ENCODE measurements at regions of chr7 and their contacts with region 1.

Region 1: GRCh38 chr7:157961731-157962457 is 625.1 kb downstream of the DNAJB6 start:
- DNase-seq: no peak
- H3K4me3 ChIP-seq: no peak overlapping the region
- H3K27ac ChIP-seq: no peak overlapping the region
- H3K4me1 ChIP-seq: no peaks in the 10 kb centered on the region
- H3K27me3 ChIP-seq: no peaks in the 10 kb centered on the region
- CTCF ChIP-seq: no peak

Region 2: DNA sequence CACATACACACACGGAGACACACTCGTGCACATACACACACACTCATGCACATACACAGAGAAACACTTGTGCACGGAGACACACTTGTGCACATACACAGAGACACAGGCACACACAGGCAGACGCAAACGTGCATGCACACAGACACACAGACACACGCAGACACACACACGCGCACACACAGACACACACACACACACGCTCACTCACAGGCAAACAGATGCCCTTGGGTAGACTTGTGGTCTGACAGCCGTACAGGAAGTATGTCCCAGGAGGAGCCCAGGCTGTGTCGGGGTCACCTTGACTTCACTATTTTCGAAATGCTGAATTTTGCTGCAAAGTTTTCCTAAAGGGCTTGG is 87.0 kb before region 1 on chr7:
- CTCF ChIA-PET with region 1: no interaction called
- dilution Hi-C with region 1: loop called (anchors 5 kb)
- in situ Hi-C with region 1: no loop called
- intact Hi-C with region 1: no loop called
- DNase-seq: no peak
- H3K4me3 ChIP-seq: no peak overlapping the region
- H3K27ac ChIP-seq: no peak overlapping the region
- H3K4me1 ChIP-seq: no peaks in the 10 kb centered on the region
- H3K27me3 ChIP-seq: no peaks in the 10 kb centered on the region
- CTCF ChIP-seq: no peak

Region 3: DNA sequence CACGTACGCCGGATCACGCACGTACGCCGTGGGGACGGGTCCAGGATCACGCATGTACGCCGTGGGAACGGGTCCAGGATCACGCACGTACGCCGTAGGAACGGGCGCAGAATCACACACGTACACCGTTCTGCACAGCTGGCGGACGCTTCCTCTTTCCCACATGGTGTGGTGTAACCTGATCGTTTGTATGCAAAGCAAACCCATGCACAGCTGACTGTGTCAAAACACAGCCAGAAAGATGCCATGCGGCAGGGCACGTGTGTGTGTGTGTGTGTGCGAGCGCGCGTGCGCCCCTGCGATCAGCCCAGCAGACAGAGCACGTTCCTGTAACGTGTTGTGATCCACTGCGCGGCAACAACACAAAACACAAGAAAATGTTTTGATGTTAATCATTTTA is 51.4 kb before region 1 on chr7:
- CTCF ChIA-PET with region 1: no interaction called
- dilution Hi-C with region 1: loop called (anchors 5 kb)
- in situ Hi-C with region 1: no loop called
- intact Hi-C with region 1: no loop called
- DNase-seq: no peak
- H3K4me3 ChIP-seq: no peak overlapping the region
- H3K27ac ChIP-seq: no peak overlapping the region
- H3K4me1 ChIP-seq: no peaks in the 10 kb centered on the region
- H3K27me3 ChIP-seq: no peaks in the 10 kb centered on the region
- CTCF ChIP-seq: no peak

Region 4: GRCh38 chr7:158239290-158239981 is 277.5 kb after region 1 on chr7:
- CTCF ChIA-PET with region 1: no interaction called
- dilution Hi-C with region 1: no loop called
- in situ Hi-C with region 1: no loop called
- intact Hi-C with region 1: no loop called
- DNase-seq: no peak
- H3K4me3 ChIP-seq: no peak overlapping the region
- H3K27ac ChIP-seq: no peak overlapping the region
- H3K4me1 ChIP-seq: no peaks in the 10 kb centered on the region
- H3K27me3 ChIP-seq: no peaks in the 10 kb centered on the region
- CTCF ChIP-seq: no peak